ENCODE measurements at regions of chr6 and their contacts with region 1.

Region 1: GRCh38 chr6:117602151-117602898 is at the start of gene GOPC:
- DNase-seq: peak; percentile 97
- ATAC-seq: peak; percentile 97
- H3K4me3 Mint-ChIP-seq: peak within 1 kb of the TSS; percentile 97
- H3K27ac Mint-ChIP-seq: peak within 1 kb of the TSS; percentile 98
- H3K4me1 Mint-ChIP-seq: peaks cover 36% of the 10 kb centered on the region
- H3K27me3 Mint-ChIP-seq: peaks cover 2% of the 10 kb centered on the region
- total RNA-seq, gene GOPC: 21.3 to 25.0 TPM

Region 2: GRCh38 chr6:117482240-117483003 is 119.9 kb before region 1 on chr6 and contains the start of gene DCBLD1:
- CTCF ChIA-PET with region 1: interaction called, 11 read pairs
- DNase-seq: peak; percentile 76
- ATAC-seq: peak; percentile 87
- H3K4me3 Mint-ChIP-seq: peak within 1 kb of the TSS; percentile 81
- H3K27ac Mint-ChIP-seq: peak within 1 kb of the TSS; percentile 68
- H3K4me1 Mint-ChIP-seq: peaks cover 16% of the 10 kb centered on the region
- H3K27me3 Mint-ChIP-seq: peaks cover 41% of the 10 kb centered on the region
- total RNA-seq, gene DCBLD1: 5.8 to 6.1 TPM

Region 3: DNA sequence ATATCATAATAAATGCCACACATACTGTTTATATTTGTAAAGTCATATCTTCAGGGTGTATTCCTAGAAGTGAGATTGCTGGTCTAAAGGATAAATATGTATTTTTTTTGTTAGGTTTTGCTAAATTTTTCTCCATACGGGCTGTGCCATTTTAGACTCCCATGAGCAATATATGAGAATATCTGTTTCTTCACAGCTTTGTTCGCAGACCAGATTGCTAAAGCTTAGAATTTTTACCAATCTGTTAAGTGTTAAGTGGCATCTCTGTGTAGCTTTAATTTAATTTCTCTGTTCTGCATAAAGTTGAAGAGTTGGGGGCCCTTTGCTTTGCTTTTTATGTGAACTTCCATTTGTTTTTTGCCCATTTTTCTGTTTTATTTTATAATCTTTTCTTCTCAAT is 40.7 kb after region 1 on chr6:
- CTCF ChIA-PET with region 1: no interaction called
- DNase-seq: no peak
- ATAC-seq: no peak
- H3K4me3 Mint-ChIP-seq: no peak overlapping the region
- H3K27ac Mint-ChIP-seq: no peak overlapping the region
- H3K4me1 Mint-ChIP-seq: no peaks in the 10 kb centered on the region
- H3K27me3 Mint-ChIP-seq: no peaks in the 10 kb centered on the region

Measured in activated CD8-positive, alpha-beta memory T cell treated with anti-CD3 and anti-CD28 coated beads, Interleukin-2, amount 10 ng/mL, durations not matched to agents 7 days and 5 days (primary cell).